Cardiac septum (tissue), 1 donor: ENCODE measurements at regions of chr2 and their contacts with region 1.

Region 1: DNA sequence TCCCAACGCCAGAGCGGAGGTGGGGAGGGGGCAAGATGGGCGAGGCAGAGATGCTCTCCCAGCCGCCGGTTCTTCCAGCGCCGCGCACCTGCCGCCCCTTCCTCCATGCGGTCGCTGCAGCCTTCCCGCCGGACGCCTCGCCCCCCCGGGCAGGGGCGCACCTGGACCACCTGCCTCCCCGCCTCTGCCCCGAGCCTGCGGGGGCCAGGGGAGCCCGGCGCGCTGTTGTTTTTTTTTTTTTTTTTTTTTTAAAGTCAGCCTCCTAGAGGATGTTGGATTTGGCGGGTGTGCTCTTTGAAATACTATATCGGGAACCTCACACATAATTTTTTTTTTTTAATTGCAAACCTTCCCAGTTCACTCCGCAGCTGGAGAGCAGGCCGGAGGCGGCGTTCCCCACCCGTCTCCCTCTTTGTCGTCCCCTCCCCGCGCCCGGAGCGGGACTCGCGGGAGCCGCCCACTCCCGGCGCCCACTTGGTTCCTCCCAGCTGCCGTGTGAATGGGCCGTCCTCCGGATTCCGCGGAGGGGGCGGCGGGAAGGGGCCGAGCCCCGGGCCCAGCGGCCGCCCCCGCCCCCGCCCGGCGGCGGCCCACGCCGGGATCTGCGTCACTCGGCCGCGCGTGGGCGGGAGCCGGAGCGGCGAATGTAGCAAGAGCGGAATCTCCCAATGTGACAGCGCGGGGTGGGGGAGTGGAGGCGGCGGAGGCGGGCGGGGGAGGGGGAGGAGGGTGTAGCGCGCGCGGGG is 421 bp upstream of the NAB1 start:
- DNase-seq: peak; percentile 95

Region 2: GRCh38 chr2:190468814-190469569 is 179.5 kb before region 1 on chr2:
- intact Hi-C with region 1: loop called (anchors 1 kb)
- DNase-seq: peak; percentile 87

Region 3: GRCh38 chr2:190534310-190535120 is 113.9 kb before region 1 on chr2 and contains the start of gene NEMP2:
- intact Hi-C with region 1: loop called (anchors 1 kb)
- DNase-seq: peak; percentile 92
- total RNA-seq, gene NEMP2: 3.6 TPM

Region 4: DNA sequence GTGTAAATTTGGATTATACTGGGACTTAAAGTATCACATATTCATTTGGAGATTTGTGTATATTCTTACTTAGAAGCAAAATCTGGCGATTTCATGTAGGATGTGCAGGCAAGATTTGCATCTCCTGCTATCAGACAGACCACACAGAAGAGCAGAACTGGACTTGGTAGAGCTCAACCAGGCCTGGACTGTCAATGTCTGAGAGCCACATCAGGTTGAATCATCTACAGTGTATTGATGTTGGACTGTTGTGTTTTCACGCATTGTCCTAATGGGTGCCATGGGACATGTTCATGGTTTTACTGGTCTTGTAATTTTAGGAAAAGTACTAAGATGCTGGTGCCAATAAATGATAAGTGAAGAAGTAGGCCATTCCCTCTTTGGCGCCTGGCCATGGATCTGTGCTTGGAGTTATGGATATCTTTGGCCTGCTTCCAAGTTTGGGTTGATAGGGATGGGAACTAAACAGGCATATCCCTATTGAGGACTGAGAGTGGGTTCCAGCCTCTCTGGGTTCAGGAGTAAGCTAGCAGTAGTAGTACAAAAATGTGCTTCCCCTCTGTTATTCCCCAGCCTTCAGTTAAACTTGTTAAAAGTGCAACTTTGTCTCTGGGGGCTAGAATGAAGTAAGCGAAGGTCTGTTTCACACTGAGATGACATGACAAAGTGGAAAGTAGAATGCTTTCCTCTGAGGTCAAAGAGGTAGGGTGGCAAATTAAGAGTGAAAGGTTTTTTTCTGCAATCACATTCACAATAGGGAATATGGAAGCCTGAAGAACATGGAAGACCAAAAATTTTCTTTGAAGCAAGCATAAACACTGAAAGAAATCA is 64.7 kb before region 1 on chr2:
- intact Hi-C with region 1: loop called (anchors 5 kb)
- DNase-seq: no peak

Region 5: DNA sequence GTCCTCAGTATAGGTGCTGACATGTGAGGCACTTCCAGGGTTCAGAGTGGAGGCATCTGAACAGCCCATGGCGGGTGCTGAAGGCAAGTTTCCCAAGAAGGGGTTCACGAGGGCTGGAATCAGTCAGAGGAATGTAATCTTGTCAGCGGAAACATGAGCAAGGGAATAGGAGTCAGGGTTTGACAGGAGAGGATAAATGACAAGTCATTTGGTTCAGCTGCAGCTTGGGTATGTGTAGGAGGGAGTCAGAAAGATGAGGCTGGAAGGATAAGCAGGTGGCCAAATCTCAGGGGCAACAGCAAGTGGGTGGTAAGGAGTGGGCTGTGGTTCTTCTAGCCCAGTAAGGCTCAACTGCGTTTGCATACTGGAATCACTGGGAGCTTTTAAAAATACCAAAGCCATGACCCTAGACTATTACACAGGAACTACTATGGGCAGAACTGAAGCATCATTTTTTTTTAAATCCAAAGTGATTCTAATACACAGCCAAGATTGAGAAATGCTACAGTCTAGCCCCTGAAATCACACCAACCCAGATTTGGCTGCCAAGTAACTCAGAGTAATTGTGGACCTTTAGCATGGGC is 41.4 kb before region 1 on chr2:
- intact Hi-C with region 1: no loop called
- DNase-seq: no peak

Region 6: DNA sequence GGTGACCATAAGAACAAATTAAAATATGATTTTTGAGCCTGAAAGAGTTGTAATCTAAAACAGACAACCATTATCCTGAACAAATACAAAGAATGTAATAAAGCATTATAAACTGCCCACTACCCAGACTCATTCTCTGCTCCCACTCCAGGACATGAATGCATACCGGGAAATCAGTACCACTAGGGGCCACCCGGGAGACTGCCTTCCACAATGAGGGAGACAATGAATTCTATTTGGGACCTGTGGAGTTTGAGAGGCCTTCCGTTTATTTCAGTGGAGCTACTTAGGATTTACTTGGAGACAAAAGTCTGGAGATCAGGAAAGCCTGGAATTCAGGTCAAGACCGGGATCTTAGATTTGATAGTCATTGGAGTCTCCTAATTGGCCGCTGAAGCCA is 50.4 kb after region 1 on chr2:
- intact Hi-C with region 1: no loop called
- DNase-seq: no peak

Region 7: GRCh38 chr2:190722061-190722759 is 73.7 kb after region 1 on chr2:
- intact Hi-C with region 1: loop called (anchors 2 kb)
- DNase-seq: no peak

Region 8: GRCh38 chr2:190880378-190881073 is 232.1 kb after region 1 on chr2 and contains the start of gene GLS:
- intact Hi-C with region 1: loop called (anchors 5 kb)
- DNase-seq: peak; percentile 99
- total RNA-seq, gene GLS: 80.2 TPM

Region 9: DNA sequence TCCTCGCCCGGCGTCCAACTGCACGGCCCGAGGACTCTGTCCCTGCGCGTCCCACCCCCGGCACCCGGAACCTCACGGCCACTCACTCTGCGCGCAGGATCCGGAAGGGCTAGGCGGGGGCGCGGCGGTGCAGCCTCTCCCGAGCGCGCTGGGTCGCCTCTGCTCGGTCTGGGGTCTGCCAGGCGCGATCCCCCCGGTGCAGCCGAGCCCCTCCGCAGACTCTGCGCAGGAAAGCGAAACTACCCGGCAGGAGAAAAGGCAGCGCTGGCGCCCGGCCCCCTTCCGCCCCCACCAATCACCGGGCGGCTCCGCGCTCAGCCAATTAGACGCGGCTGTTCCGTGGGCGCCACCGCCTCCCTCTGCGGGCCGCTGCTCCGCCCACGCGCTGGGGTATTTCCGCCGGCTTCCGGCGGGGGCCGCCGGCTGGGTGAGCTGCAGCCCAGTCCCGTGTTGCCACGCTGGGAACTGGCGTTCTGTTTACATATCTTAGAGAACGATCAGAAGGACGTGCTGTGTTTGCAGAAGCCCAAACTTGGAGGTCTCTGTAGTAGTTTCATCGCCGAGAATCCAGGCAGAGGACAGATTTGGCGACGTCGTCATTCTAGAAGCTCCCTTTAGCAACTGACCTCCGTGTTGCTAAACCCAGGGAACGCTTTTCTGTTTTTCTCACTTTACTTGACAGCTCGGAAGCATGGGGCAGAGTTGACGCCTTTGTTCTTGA is 365.6 kb after region 1 on chr2 and contains the start of gene STAT1:
- intact Hi-C with region 1: loop called (anchors 10 kb)
- DNase-seq: peak; percentile 97
- total RNA-seq, gene STAT1: 53.2 TPM

Region 10: GRCh38 chr2:191056228-191056627 is 407.8 kb after region 1 on chr2:
- intact Hi-C with region 1: no loop called
- DNase-seq: no peak